Activated CD8-positive, alpha-beta T cell treated with anti-CD3 and anti-CD28 coated beads for 36 hours (primary cell): ENCODE measurements at regions of chr2 and their contacts with region 1.

Region 1: GRCh38 chr2:181457121-181457740 is at the start of gene ITGA4:
- DNase-seq: peak; percentile 90
- ATAC-seq: peak; percentile 80
- H3K4me3 Mint-ChIP-seq: peak within 1 kb of the TSS; percentile 92
- H3K27ac Mint-ChIP-seq: peak within 1 kb of the TSS; percentile 93
- H3K4me1 Mint-ChIP-seq: peaks cover 34% of the 10 kb centered on the region
- H3K27me3 Mint-ChIP-seq: no peaks in the 10 kb centered on the region
- CTCF ChIP-seq: peak; percentile 82
- total RNA-seq, gene ITGA4: 61.6 to 64.5 TPM

Region 2: DNA sequence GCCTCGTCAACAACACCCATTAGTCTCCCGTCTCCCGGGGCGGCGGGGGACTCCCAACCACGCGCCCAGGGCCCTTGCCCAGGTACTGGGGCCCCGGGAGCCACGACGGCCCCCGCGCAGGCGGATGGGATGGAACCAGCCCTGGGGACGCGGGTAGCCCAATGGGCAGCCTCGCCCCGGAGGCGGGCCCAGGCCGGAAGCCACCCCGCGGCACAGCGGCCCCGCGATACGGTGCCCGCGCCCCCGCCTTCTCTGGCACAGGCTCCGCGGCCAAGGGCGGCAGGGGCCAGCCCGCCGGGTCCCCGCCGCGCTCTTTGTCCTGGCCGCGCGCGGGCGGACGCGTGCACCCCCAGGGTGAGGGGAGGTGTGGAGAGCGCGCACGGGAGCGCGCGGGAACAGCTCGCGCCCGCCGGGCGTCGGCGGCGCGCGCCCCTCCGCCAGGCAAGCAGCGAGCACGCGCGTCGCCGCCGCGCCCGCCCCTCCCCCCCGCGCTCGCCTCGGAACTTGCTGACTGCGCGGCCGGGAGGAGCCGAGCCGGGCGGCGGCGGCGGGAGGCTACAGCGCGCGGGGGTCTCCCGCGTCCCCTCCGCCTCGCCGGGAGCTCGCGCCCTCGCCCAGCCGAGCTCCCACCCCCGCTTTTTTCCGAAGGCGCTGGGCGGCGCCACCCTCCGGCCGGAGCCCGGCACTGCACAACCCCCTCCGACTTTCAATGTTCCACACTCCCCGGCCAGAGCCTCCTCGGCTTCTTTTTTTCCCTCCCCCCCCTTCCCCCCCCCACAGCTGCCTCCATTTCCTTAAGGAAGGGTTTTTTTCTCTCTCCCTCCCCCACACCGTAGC is 476.9 kb before region 1 on chr2 and contains the start of gene UBE2E3:
- CTCF ChIA-PET with region 1: no interaction called
- POLR2A ChIA-PET with region 1: no interaction called
- intact Hi-C with region 1: loop called (anchors 5 kb)
- DNase-seq: peak; percentile 83
- ATAC-seq: peak; percentile 81
- H3K4me3 Mint-ChIP-seq: peak within 1 kb of the TSS; percentile 94
- H3K27ac Mint-ChIP-seq: peak within 1 kb of the TSS; percentile 98
- H3K4me1 Mint-ChIP-seq: peaks cover 39% of the 10 kb centered on the region
- H3K27me3 Mint-ChIP-seq: no peaks in the 10 kb centered on the region
- CTCF ChIP-seq: peak; percentile 56
- total RNA-seq, gene UBE2E3: 26.7 to 29.4 TPM

Region 3: GRCh38 chr2:181123798-181124231 is 333.4 kb before region 1 on chr2:
- CTCF ChIA-PET with region 1: interaction called, 5 read pairs
- POLR2A ChIA-PET with region 1: interaction called, 11 read pairs
- intact Hi-C with region 1: loop called (anchors 5 kb)
- DNase-seq: peak; percentile 78
- ATAC-seq: peak; percentile 91
- H3K4me3 Mint-ChIP-seq: peak overlapping the region; percentile 61
- H3K27ac Mint-ChIP-seq: peak overlapping the region; percentile 91
- H3K4me1 Mint-ChIP-seq: peaks cover 53% of the 10 kb centered on the region
- H3K27me3 Mint-ChIP-seq: no peaks in the 10 kb centered on the region
- CTCF ChIP-seq: no peak

Region 4: GRCh38 chr2:181140414-181140813 is 316.8 kb before region 1 on chr2:
- CTCF ChIA-PET with region 1: interaction called, 4 read pairs
- POLR2A ChIA-PET with region 1: interaction called, 16 read pairs
- intact Hi-C with region 1: no loop called
- DNase-seq: no peak
- ATAC-seq: no peak
- H3K4me3 Mint-ChIP-seq: no peak overlapping the region
- H3K27ac Mint-ChIP-seq: peak overlapping the region; percentile 97
- H3K4me1 Mint-ChIP-seq: peaks cover 78% of the 10 kb centered on the region
- H3K27me3 Mint-ChIP-seq: no peaks in the 10 kb centered on the region
- CTCF ChIP-seq: no peak

Region 5: GRCh38 chr2:181305301-181306123 is 151.7 kb before region 1 on chr2:
- CTCF ChIA-PET with region 1: interaction called, 20 read pairs
- POLR2A ChIA-PET with region 1: interaction called, 26 read pairs
- intact Hi-C with region 1: no loop called
- DNase-seq: peak; percentile 76
- ATAC-seq: peak; percentile 81
- H3K4me3 Mint-ChIP-seq: peak overlapping the region; percentile 64
- H3K27ac Mint-ChIP-seq: peak overlapping the region; percentile 92
- H3K4me1 Mint-ChIP-seq: peaks cover 58% of the 10 kb centered on the region
- H3K27me3 Mint-ChIP-seq: no peaks in the 10 kb centered on the region
- CTCF ChIP-seq: no peak

Region 6: DNA sequence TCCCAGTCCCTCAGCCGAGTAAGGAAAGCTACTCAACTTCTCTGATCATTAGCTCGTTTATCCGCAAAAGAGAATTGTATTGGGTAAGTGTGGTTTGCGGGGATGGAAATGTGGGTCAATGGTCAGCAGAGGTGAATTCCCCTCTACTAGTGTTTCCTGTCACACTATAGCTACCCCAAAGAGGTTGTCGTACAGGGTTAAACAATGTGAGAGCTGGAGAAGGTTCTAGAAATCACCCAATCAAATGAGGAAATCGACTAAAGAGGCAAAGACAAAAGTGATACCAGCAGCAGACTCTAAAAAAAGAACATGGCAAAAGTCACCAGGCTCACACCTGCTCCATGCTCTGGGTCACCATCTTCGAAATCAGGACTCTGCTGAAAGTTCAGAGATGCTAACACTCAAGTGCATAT is 144.7 kb before region 1 on chr2:
- CTCF ChIA-PET with region 1: interaction called, 20 read pairs
- POLR2A ChIA-PET with region 1: interaction called, 26 read pairs
- intact Hi-C with region 1: loop called (anchors 2 kb)
- DNase-seq: peak; percentile 78
- ATAC-seq: peak; percentile 77
- H3K4me3 Mint-ChIP-seq: peak overlapping the region; percentile 83
- H3K27ac Mint-ChIP-seq: peak overlapping the region; percentile 100
- H3K4me1 Mint-ChIP-seq: peaks cover 52% of the 10 kb centered on the region
- H3K27me3 Mint-ChIP-seq: no peaks in the 10 kb centered on the region
- CTCF ChIP-seq: no peak

Region 7: DNA sequence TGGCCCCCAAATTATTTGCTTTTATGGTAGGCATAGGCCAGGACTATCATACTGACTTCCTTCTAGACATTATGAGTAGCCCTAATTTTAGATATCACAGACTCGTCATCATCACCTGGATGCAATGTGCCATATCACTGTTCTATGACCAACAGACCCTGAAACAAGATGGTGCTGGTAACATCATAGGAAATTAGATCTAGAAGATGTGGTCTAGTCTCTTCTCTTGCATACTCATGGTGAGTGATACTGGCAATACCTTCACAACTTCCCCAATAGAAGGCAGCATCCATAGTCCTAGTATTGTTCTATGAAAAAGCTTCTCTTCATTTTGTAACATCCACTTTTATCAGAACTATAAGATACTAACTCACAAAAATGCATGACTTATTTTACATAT is 116.3 kb before region 1 on chr2:
- CTCF ChIA-PET with region 1: no interaction called
- POLR2A ChIA-PET with region 1: no interaction called
- intact Hi-C with region 1: no loop called
- DNase-seq: no peak
- ATAC-seq: no peak
- H3K4me3 Mint-ChIP-seq: no peak overlapping the region
- H3K27ac Mint-ChIP-seq: no peak overlapping the region
- H3K4me1 Mint-ChIP-seq: peaks cover 4% of the 10 kb centered on the region
- H3K27me3 Mint-ChIP-seq: no peaks in the 10 kb centered on the region
- CTCF ChIP-seq: no peak